T-cell (primary cell): ENCODE measurements at regions of chr16 and their contacts with region 1.

Region 1: GRCh38 chr16:17343028-17343427 is 127.7 kb downstream of the XYLT1 start:
- DNase-seq: peak in 34 of 35 experiments; percentile 14 to 83 (median 56)
- ATAC-seq: peak; percentile 38 to 91 (median 54)
- H3K4me3 ChIP-seq: peak overlapping the region in 1 of 2 donors; percentile 6
- H3K4me3 Mint-ChIP-seq: peak overlapping the region; percentile 46 to 65 (median 60)
- H3K27ac ChIP-seq: peak overlapping the region; percentile 24
- H3K27ac Mint-ChIP-seq: peak overlapping the region; percentile 86 to 87
- H3K4me1 ChIP-seq: peaks cover 38 to 73% of the 10 kb centered on the region in 2 experiments
- H3K4me1 Mint-ChIP-seq: peaks cover 74 to 80% (median 76%) of the 10 kb centered on the region in 3 donors
- H3K27me3 ChIP-seq: no peaks in the 10 kb centered on the region
- H3K27me3 Mint-ChIP-seq: no peaks in the 10 kb centered on the region

Region 2: GRCh38 chr16:17369421-17370222 is 26.6 kb after region 1 on chr16:
- CTCF ChIA-PET with region 1: no interaction called
- POLR2A ChIA-PET with region 1: interaction called in 1 of 2 experiments, 11 read pairs
- DNase-seq: peak; percentile 65 to 90 (median 80)
- ATAC-seq: peak; percentile 86 to 92 (median 90)
- H3K4me3 ChIP-seq: peak overlapping the region; percentile 50 to 58
- H3K4me3 Mint-ChIP-seq: peak overlapping the region; percentile 84 to 88 (median 88)
- H3K27ac ChIP-seq: peak overlapping the region; percentile 94
- H3K27ac Mint-ChIP-seq: peak overlapping the region; percentile 98 to 100
- H3K4me1 ChIP-seq: peaks cover 71 to 87% of the 10 kb centered on the region in 2 experiments
- H3K4me1 Mint-ChIP-seq: peaks cover 90 to 97% (median 95%) of the 10 kb centered on the region in 3 donors
- H3K27me3 ChIP-seq: no peaks in the 10 kb centered on the region
- H3K27me3 Mint-ChIP-seq: no peaks in the 10 kb centered on the region